Naive thymus-derived CD4-positive, alpha-beta T cell (primary cell): ENCODE measurements at regions of chr14 and their contacts with region 1.

Region 1: DNA sequence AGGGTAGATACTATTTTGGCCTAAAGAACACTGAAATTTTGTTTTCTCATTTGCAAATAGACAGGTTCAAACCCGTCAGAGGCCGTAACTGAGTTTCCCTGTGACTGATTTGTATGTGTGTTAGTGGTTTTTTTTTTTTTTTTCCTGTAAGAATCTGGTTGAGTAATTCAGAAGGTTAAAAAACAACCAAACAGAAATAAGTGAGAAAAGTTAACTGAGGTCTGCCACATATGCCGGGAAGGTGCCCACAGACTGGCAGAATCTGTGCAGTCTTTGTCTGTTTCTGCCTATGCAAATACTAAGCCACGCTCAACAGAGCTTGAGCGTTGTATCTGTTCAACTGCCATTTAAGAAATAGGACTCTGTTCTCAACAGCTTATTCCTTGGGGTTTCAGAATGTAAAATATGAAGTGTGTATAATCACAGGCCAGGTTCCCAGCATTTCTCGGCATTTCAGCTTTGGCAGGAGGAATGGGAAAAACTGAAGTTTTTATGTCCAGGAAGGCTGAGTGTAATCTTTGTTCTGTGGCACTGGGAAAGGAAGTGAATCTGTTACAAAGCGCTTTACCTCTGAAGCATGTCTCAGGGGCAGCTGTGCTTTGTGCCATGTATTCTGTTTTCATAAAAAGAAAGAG is 181.9 kb downstream of the PRKCH start:
- DNase-seq: peak in 8 of 9 donors; percentile 57 to 83 (median 67)
- ATAC-seq: peak; percentile 91
- H3K4me3 ChIP-seq: peak overlapping the region; percentile 25
- H3K4me3 Mint-ChIP-seq: peak overlapping the region; percentile 58 to 88 (median 80)
- H3K27ac ChIP-seq: peak overlapping the region; percentile 78
- H3K27ac Mint-ChIP-seq: peak overlapping the region in 6 of 9 donors; percentile 92 to 99 (median 97)
- H3K4me1 ChIP-seq: peaks cover 56 to 85% of the 10 kb centered on the region in 2 donors
- H3K4me1 Mint-ChIP-seq: peaks cover 78 to 100% (median 93%) of the 10 kb centered on the region in 7 donors
- H3K27me3 ChIP-seq: no peaks in the 10 kb centered on the region
- H3K27me3 Mint-ChIP-seq: no peaks in the 10 kb centered on the region

Region 2: GRCh38 chr14:61493239-61493638 is 10.0 kb before region 1 on chr14:
- CTCF ChIA-PET with region 1: interaction called, 3 read pairs
- POLR2A ChIA-PET with region 1: interaction called, 5 read pairs
- intact Hi-C with region 1: loop called in 1 of 2 experiments (anchors 1 kb)
- DNase-seq: no peak
- ATAC-seq: no peak
- H3K4me3 ChIP-seq: no peak overlapping the region
- H3K4me3 Mint-ChIP-seq: no peak overlapping the region
- H3K27ac ChIP-seq: peak overlapping the region; percentile 39
- H3K27ac Mint-ChIP-seq: no peak overlapping the region
- H3K4me1 ChIP-seq: peaks cover 12 to 21% of the 10 kb centered on the region in 2 donors
- H3K4me1 Mint-ChIP-seq: peaks cover 7 to 39% (median 25%) of the 10 kb centered on the region in 7 donors
- H3K27me3 ChIP-seq: no peaks in the 10 kb centered on the region
- H3K27me3 Mint-ChIP-seq: no peaks in the 10 kb centered on the region

Region 3: GRCh38 chr14:61517911-61518384 is 14.7 kb after region 1 on chr14:
- CTCF ChIA-PET with region 1: interaction called, 4 read pairs
- POLR2A ChIA-PET with region 1: interaction called, 3 read pairs
- intact Hi-C with region 1: loop called in 1 of 2 experiments (anchors 1 kb)
- DNase-seq: no peak
- ATAC-seq: no peak
- H3K4me3 ChIP-seq: no peak overlapping the region
- H3K4me3 Mint-ChIP-seq: peak overlapping the region in 4 of 10 donors; percentile 9 to 45 (median 22)
- H3K27ac ChIP-seq: no peak overlapping the region
- H3K27ac Mint-ChIP-seq: peak overlapping the region in 8 of 9 donors; percentile 19 to 84 (median 77)
- H3K4me1 ChIP-seq: peaks cover 18 to 50% of the 10 kb centered on the region in 2 donors
- H3K4me1 Mint-ChIP-seq: peaks cover 44 to 94% (median 90%) of the 10 kb centered on the region in 7 donors
- H3K27me3 ChIP-seq: no peaks in the 10 kb centered on the region
- H3K27me3 Mint-ChIP-seq: no peaks in the 10 kb centered on the region

Region 4: GRCh38 chr14:61531741-61532505 is 28.6 kb after region 1 on chr14:
- CTCF ChIA-PET with region 1: no interaction called
- POLR2A ChIA-PET with region 1: interaction called, 4 read pairs
- intact Hi-C with region 1: loop called in 1 of 2 experiments (anchors 2 kb)
- DNase-seq: no peak
- ATAC-seq: no peak
- H3K4me3 ChIP-seq: no peak overlapping the region
- H3K4me3 Mint-ChIP-seq: no peak overlapping the region
- H3K27ac ChIP-seq: peak overlapping the region; percentile 33
- H3K27ac Mint-ChIP-seq: peak overlapping the region in 8 of 9 donors; percentile 36 to 85 (median 68)
- H3K4me1 ChIP-seq: peaks cover 4 to 15% of the 10 kb centered on the region in 2 donors
- H3K4me1 Mint-ChIP-seq: peaks cover 29 to 81% (median 58%) of the 10 kb centered on the region in 7 donors
- H3K27me3 ChIP-seq: no peaks in the 10 kb centered on the region
- H3K27me3 Mint-ChIP-seq: no peaks in the 10 kb centered on the region